MCF 10A (cell line): ENCODE measurements at regions of chr13 and their contacts with region 1.

Region 1: GRCh38 chr13:95403828-95404522 is 102.7 kb upstream of the ABCC4 start:
- DNase-seq: peak; percentile 88
- H3K4me3 Mint-ChIP-seq: peak overlapping the region; percentile 53
- H3K27ac Mint-ChIP-seq: no peak overlapping the region
- H3K4me1 Mint-ChIP-seq: peaks cover 6% of the 10 kb centered on the region
- H3K27me3 Mint-ChIP-seq: no peaks in the 10 kb centered on the region
- CTCF ChIP-seq: peak; percentile 99

Region 2: GRCh38 chr13:95181586-95181985 is 222.4 kb before region 1 on chr13:
- CTCF ChIA-PET with region 1: interaction called, 327 read pairs
- POLR2A ChIA-PET with region 1: no interaction called
- intact Hi-C with region 1: no loop called
- DNase-seq: no peak
- H3K4me3 Mint-ChIP-seq: no peak overlapping the region
- H3K27ac Mint-ChIP-seq: no peak overlapping the region
- H3K4me1 Mint-ChIP-seq: peaks cover 8% of the 10 kb centered on the region
- H3K27me3 Mint-ChIP-seq: no peaks in the 10 kb centered on the region
- CTCF ChIP-seq: no peak

Region 3: GRCh38 chr13:95284436-95284835 is 119.5 kb before region 1 on chr13:
- CTCF ChIA-PET with region 1: no interaction called
- POLR2A ChIA-PET with region 1: no interaction called
- intact Hi-C with region 1: no loop called
- DNase-seq: no peak
- H3K4me3 Mint-ChIP-seq: no peak overlapping the region
- H3K27ac Mint-ChIP-seq: no peak overlapping the region
- H3K4me1 Mint-ChIP-seq: peaks cover 6% of the 10 kb centered on the region
- H3K27me3 Mint-ChIP-seq: no peaks in the 10 kb centered on the region
- CTCF ChIP-seq: no peak

Region 4: GRCh38 chr13:95301183-95301967 is 102.6 kb before region 1 on chr13 and contains the start of gene ABCC4:
- CTCF ChIA-PET with region 1: interaction called, 84 read pairs
- POLR2A ChIA-PET with region 1: no interaction called
- intact Hi-C with region 1: loop called (anchors 1 kb)
- DNase-seq: peak; percentile 66
- H3K4me3 Mint-ChIP-seq: peak within 1 kb of the TSS; percentile 75
- H3K27ac Mint-ChIP-seq: peak within 1 kb of the TSS; percentile 41
- H3K4me1 Mint-ChIP-seq: peaks cover 10% of the 10 kb centered on the region
- H3K27me3 Mint-ChIP-seq: no peaks in the 10 kb centered on the region
- CTCF ChIP-seq: no peak
- total RNA-seq, gene ABCC4: 13.8 and 13.9 TPM in 2 replicates

Region 5: DNA sequence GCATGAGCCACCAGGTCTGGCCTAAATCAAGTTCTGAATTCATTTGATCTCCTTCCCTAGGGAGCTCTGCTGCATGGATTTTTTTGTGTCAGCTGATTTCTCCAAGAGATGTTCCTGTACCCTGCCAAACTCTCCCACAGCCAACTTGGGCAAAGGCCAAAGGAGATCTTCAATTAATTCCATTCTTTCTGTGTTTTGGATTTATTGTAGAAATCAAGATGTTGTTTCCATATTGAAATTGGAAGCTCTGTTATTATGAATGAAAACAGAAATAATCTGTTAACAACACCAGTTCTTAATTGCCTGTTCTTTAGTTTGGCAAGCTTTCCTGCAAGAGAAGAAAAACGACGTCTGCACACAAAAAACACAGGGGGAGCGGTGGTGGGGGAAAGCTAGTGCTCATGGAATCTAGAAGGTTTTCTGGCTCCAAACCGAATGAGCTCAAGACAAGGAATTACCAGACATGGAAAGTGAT is 16.2 kb before region 1 on chr13:
- CTCF ChIA-PET with region 1: interaction called, 172 read pairs
- POLR2A ChIA-PET with region 1: interaction called, 3 read pairs
- intact Hi-C with region 1: no loop called
- DNase-seq: no peak
- H3K4me3 Mint-ChIP-seq: no peak overlapping the region
- H3K27ac Mint-ChIP-seq: no peak overlapping the region
- H3K4me1 Mint-ChIP-seq: no peaks in the 10 kb centered on the region
- H3K27me3 Mint-ChIP-seq: peaks cover 36% of the 10 kb centered on the region
- CTCF ChIP-seq: no peak

Region 6: GRCh38 chr13:95564733-95565291 is 160.8 kb after region 1 on chr13:
- CTCF ChIA-PET with region 1: interaction called, 9 read pairs
- POLR2A ChIA-PET with region 1: no interaction called
- intact Hi-C with region 1: loop called (anchors 1 kb)
- DNase-seq: peak; percentile 92
- H3K4me3 Mint-ChIP-seq: peak overlapping the region; percentile 56
- H3K27ac Mint-ChIP-seq: peak overlapping the region; percentile 17
- H3K4me1 Mint-ChIP-seq: peaks cover 26% of the 10 kb centered on the region
- H3K27me3 Mint-ChIP-seq: no peaks in the 10 kb centered on the region
- CTCF ChIP-seq: no peak

Region 7: DNA sequence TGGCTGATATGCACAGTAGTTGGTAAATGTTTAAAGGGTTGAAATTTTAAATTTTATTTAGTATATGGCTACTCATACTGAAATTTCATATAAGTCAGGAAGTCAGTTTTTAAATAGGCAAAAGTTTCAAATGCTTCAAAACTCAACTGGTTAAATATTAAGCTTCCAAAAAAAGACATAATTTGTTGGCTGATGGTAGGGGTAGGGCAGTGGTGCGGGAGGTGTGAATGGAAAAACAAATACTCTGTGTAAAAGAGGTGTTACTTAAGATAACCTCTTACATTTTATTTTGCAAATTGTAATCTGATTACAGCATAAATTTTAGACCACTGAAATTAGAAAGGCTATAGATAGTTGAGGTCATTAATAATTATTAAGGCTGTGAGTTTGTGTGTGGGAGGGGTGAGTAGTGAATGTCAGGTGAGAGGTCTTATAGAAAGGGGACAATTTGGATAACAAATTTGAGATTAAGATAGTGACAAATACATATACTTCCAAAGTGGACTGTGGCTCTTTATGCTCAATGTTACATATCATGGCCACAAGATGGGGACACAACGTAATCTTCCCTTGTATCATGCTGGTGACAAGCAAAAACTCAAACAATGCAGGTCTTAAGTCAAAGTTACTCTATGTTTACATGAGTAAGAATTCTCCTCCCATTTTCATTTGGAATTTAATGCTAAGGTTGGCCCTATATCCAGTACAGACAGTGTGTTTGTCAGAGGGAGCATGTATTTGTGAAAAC is 1626.9 kb after region 1 on chr13:
- CTCF ChIA-PET with region 1: interaction called, 5 read pairs
- POLR2A ChIA-PET with region 1: no interaction called
- intact Hi-C with region 1: loop called (anchors 1 kb)
- DNase-seq: peak; percentile 51
- H3K4me3 Mint-ChIP-seq: no peak overlapping the region
- H3K27ac Mint-ChIP-seq: no peak overlapping the region
- H3K4me1 Mint-ChIP-seq: peaks cover 5% of the 10 kb centered on the region
- H3K27me3 Mint-ChIP-seq: no peaks in the 10 kb centered on the region
- CTCF ChIP-seq: peak; percentile 38